HCT116 (cell line): ENCODE measurements at regions of chr19 and their contacts with region 1.

Region 1: DNA sequence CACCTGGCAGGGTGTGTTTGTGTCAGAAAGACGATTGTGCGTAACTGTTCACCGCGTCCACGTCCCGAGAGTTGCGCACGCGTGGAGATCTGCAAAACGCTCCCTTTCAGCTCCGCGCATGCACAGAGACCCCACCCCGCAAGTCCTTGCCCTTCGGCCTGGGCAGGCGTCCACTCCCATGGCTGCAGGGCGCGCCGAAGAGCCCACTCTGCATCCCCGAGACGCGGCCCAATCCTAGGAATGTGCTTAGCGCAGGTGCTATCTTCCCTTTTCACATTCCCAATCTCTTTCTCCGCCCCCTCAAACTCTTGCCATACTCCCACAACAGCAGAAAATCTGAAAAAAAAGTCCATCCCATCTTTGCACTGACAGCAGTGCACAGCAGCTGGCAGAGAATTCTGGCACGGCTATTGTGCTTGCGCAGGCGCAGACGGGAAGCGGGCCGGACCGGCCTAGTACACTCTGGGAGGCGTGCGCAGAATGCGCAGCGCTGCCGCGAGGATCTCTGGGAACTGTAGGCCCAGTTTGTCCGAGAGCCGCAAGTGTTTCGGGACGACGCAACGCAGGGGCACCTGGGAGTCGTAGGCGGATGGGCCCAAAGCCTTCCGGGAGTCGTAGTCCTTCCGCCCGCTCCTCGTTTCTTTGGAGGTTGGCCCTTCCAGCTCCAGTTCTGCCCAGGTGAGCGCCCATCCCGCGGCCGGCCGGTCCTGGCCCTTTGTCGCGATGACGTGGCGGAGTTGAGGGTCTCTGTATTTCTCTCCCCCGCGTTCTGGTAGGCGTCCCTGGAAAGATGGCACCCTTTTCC is 23.1 kb downstream of the ZNF175 start:
- DNase-seq: peak; percentile 90
- ATAC-seq: peak; percentile 100
- H3K4me3 ChIP-seq: peak overlapping the region; percentile 51 to 58
- H3K27ac ChIP-seq: no peak overlapping the region; the same call in 1 of the 2 replicates
- H3K4me1 ChIP-seq: peaks cover 4 to 12% of the 10 kb centered on the region in 2 experiments; a peak in 2 of 4 replicates
- H3K27me3 ChIP-seq: no peaks in the 10 kb centered on the region
- CTCF ChIP-seq: no peak
- POLR2A ChIP-seq: peak; percentile 19
- RAD21 ChIP-seq: no peak

Region 2: DNA sequence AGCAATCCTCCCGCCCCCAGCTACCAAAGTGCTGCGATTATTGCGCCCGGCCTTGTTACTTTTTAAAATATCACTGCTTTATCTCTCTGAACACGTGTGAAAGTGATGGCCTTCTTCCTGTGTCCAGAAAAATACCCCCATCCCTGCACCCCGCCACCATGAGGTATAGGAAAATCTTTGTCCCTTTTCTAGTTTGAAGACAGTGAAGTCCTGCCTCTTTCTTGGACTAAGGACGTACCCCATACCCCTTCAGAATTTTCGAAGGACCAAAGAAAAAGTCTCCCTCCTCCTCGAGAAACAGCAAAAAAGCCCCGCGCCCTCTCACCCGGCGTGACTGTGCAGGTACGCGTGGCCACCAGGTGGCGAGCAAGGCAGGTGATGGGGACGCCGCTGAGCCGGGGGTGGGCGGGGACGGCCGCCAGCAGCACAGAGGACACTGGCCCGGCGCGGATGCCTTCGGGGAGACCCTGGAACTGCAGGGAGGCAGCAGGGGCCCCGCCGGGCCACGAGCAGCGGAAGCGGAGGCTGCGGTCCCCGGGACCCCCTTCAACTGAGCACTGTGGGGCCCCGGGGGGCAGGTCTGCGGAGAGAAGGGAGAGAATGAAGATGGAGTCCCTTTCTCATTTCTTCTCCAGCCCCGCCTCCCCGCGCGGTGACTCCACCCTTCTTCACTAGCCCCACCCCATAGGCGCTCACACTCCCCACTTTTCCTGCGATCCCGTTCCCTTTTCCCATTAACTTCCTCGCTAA is 255.4 kb before region 1 on chr19:
- CTCF ChIA-PET with region 1: no interaction called
- POLR2A ChIA-PET with region 1: no interaction called
- RAD21 ChIA-PET with region 1: no interaction called
- intact Hi-C with region 1: no loop called
- DNase-seq: peak; percentile 56
- ATAC-seq: peak; percentile 76
- H3K4me3 ChIP-seq: peak overlapping the region; percentile 54 to 67
- H3K27ac ChIP-seq: peak overlapping the region; percentile 55
- H3K4me1 ChIP-seq: peaks cover 5 to 45% of the 10 kb centered on the region in 2 experiments; a peak in 3 of 4 replicates
- H3K27me3 ChIP-seq: no peaks in the 10 kb centered on the region
- CTCF ChIP-seq: peak; percentile 86 to 92 (median 89)
- POLR2A ChIP-seq: no peak
- RAD21 ChIP-seq: peak; percentile 86

Region 3: GRCh38 chr19:51570962-51571575 is 23.1 kb before region 1 on chr19 and contains the start of gene ZNF175:
- CTCF ChIA-PET with region 1: no interaction called
- POLR2A ChIA-PET with region 1: interaction called, 6 read pairs
- RAD21 ChIA-PET with region 1: no interaction called
- intact Hi-C with region 1: loop called (anchors 2 kb)
- DNase-seq: peak; percentile 98
- ATAC-seq: peak; percentile 95
- H3K4me3 ChIP-seq: peak within 1 kb of the TSS; percentile 81 to 85
- H3K27ac ChIP-seq: no peak within 1 kb of the TSS
- H3K4me1 ChIP-seq: peaks cover 5 to 10% of the 10 kb centered on the region in 2 experiments; a peak in 2 of 4 replicates
- H3K27me3 ChIP-seq: peaks cover 11% of the 10 kb centered on the region; the same call in 1 of the 2 replicates
- CTCF ChIP-seq: no peak
- POLR2A ChIP-seq: no peak
- RAD21 ChIP-seq: no peak
- total RNA-seq, gene ZNF175: 9.3 TPM